ENCODE measurements at regions of chr5 and their contacts with region 1.

Region 1: GRCh38 chr5:123505633-123506032 is 6.3 kb upstream of the CSNK1G3 start:
- DNase-seq: no peak
- ATAC-seq: no peak

Region 2: GRCh38 chr5:123430019-123430418 is 75.6 kb before region 1 on chr5:
- intact Hi-C with region 1: loop called in 1 of 2 experiments (anchors 10 kb)
- DNase-seq: no peak
- ATAC-seq: peak; percentile 55 to 91